H1 (cell line): ENCODE measurements at regions of chr11 and their contacts with region 1.

Region 1: DNA sequence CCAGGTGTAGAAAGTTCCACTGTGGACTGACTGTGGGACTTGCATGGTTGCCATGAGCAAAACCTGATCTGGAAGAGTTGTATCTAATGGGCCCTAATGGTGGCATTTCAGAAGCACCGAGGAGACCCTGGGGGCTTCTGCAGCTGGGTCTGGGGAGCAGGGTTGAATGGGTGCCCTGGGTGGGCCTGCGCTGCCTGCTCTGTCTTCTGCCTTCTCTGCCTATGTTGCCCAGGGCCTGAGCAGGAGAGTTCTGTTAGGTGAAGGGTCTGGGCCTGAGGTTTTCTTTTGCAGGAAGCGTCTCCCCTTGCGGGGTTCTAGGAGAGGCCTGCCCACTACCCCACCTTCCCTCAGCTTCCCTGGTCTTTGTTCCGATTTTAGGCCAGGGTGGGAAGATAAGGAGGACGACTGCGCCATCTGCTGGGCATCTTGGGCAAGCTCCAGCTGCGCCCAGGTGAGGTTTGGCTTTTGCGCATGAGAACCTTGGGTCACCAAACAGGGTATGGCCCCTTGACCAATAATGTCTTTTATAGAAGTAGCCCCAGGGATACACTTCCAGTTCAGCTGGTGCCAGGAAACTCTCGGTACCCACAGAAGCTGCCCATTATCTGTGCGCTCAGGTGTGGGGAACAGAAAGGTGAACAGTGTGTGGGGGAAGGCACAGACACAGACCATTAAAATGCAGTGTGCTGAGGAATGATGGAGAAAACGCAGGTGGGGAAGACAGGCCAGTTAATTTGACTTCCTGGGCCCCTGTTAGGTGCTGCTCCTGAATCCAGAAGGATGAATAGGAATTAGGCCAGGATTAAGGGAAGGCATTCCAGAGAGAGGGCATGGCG is 23.2 kb downstream of the COMMD9 start:
- DNase-seq: peak; percentile 69 to 88
- H3K4me3 ChIP-seq: no peak overlapping the region
- H3K27ac ChIP-seq: no peak overlapping the region
- H3K4me1 ChIP-seq: peaks cover 0 to 1% (median 0%) of the 10 kb centered on the region in 4 experiments; a peak in 1 of 7 replicates
- H3K27me3 ChIP-seq: 0 out of 7 replicates have a peak, but pooled peaks cover 0 to 2% (median 0%) of the 10 kb centered on the region in 4 experiments
- CTCF ChIP-seq: peak; percentile 92 to 95 (median 94)
- EP300 ChIP-seq: no peak
- POLR2A ChIP-seq: no peak
- RAD21 ChIP-seq: peak; percentile 96 to 97

Region 2: GRCh38 chr11:36041988-36042611 is 223.9 kb before region 1 on chr11:
- CTCF ChIA-PET with region 1: interaction called, 11 read pairs
- POLR2A ChIA-PET with region 1: no interaction called
- DNase-seq: no peak
- H3K4me3 ChIP-seq: no peak overlapping the region
- H3K27ac ChIP-seq: no peak overlapping the region
- H3K4me1 ChIP-seq: peaks cover 0 to 9% (median 4%) of the 10 kb centered on the region in 4 experiments; a peak in 3 of 7 replicates
- H3K27me3 ChIP-seq: no peaks in the 10 kb centered on the region
- CTCF ChIP-seq: peak in 2 of 3 experiments; percentile 48 to 52; a peak in 2 of 4 replicates
- EP300 ChIP-seq: no peak
- POLR2A ChIP-seq: no peak
- RAD21 ChIP-seq: peak; percentile 50 to 59

Region 3: GRCh38 chr11:36123346-36124101 is 142.5 kb before region 1 on chr11:
- CTCF ChIA-PET with region 1: no interaction called
- POLR2A ChIA-PET with region 1: no interaction called
- DNase-seq: no peak
- H3K4me3 ChIP-seq: no peak overlapping the region
- H3K27ac ChIP-seq: no peak overlapping the region
- H3K4me1 ChIP-seq: peaks cover 3 to 12% (median 8%) of the 10 kb centered on the region in 4 experiments; a peak in 5 of 7 replicates
- H3K27me3 ChIP-seq: no peaks in the 10 kb centered on the region
- CTCF ChIP-seq: no peak
- EP300 ChIP-seq: no peak
- POLR2A ChIP-seq: no peak
- RAD21 ChIP-seq: no peak

Region 4: GRCh38 chr11:36149538-36150242 is 116.3 kb before region 1 on chr11:
- CTCF ChIA-PET with region 1: interaction called, 14 read pairs
- POLR2A ChIA-PET with region 1: no interaction called
- DNase-seq: peak in 1 of 2 experiments; percentile 75
- H3K4me3 ChIP-seq: no peak overlapping the region
- H3K27ac ChIP-seq: peak overlapping the region; percentile 60; the same call in 1 of the 2 replicates
- H3K4me1 ChIP-seq: peaks cover 0 to 16% (median 4%) of the 10 kb centered on the region in 4 experiments; a peak in 4 of 7 replicates
- H3K27me3 ChIP-seq: no peaks in the 10 kb centered on the region
- CTCF ChIP-seq: peak; percentile 45 to 69 (median 53)
- EP300 ChIP-seq: no peak
- POLR2A ChIP-seq: no peak
- RAD21 ChIP-seq: peak; percentile 76 to 79

Region 5: DNA sequence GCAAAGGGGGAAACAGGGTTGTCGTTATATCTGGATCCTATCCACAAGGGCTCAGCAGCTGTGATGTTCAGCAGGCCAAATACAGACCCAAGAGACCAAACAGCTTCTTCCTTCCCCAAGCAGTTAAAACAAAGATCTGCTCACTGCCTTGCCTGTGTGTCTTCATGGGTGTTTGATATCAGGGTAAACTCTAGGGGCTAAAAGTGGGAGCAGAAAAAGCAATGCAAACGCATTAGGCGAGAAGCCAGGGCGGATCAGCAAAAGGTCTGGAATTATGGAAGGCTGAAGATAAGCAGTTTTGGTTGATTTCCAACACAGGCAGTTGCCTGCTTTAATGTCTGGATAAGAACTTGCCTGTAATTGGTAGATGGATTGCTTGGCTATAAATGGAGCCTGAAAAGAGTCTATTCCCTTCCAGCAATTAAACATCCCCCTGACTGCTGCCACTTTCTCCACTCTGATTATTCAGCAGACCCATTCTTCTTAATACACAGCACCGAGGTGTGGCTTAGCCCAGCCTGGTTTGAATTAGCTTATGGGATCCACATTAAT is 103.1 kb before region 1 on chr11:
- CTCF ChIA-PET with region 1: interaction called, 14 read pairs
- POLR2A ChIA-PET with region 1: no interaction called
- DNase-seq: no peak
- H3K4me3 ChIP-seq: no peak overlapping the region
- H3K27ac ChIP-seq: no peak overlapping the region
- H3K4me1 ChIP-seq: peaks cover 0 to 5% (median 0%) of the 10 kb centered on the region in 4 experiments; a peak in 2 of 7 replicates
- H3K27me3 ChIP-seq: no peaks in the 10 kb centered on the region
- CTCF ChIP-seq: no peak
- EP300 ChIP-seq: no peak
- POLR2A ChIP-seq: no peak
- RAD21 ChIP-seq: no peak

Region 6: DNA sequence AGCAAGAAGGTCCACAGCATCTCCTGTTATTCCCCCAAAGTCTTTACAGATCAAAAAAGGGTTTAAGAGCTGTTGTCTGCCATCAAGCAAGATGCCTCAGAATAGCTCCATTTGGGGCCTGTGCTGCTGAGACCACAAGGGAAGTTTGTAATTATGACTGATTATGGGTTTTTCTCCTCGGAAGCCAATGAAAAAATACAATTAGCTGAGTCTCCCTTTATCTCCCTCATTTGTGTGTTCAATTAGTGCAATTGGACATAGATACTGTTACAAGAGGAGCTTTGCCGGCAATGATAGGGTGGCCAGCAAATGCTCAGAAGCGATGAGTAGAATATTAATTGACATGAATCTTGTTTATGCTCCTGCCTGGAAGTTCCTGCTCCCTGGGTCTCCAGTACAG is 60.5 kb before region 1 on chr11:
- CTCF ChIA-PET with region 1: no interaction called
- POLR2A ChIA-PET with region 1: no interaction called
- DNase-seq: no peak
- H3K4me3 ChIP-seq: no peak overlapping the region
- H3K27ac ChIP-seq: no peak overlapping the region
- H3K4me1 ChIP-seq: no peaks in the 10 kb centered on the region
- H3K27me3 ChIP-seq: no peaks in the 10 kb centered on the region
- CTCF ChIP-seq: no peak
- EP300 ChIP-seq: no peak
- POLR2A ChIP-seq: no peak
- RAD21 ChIP-seq: no peak

Region 7: DNA sequence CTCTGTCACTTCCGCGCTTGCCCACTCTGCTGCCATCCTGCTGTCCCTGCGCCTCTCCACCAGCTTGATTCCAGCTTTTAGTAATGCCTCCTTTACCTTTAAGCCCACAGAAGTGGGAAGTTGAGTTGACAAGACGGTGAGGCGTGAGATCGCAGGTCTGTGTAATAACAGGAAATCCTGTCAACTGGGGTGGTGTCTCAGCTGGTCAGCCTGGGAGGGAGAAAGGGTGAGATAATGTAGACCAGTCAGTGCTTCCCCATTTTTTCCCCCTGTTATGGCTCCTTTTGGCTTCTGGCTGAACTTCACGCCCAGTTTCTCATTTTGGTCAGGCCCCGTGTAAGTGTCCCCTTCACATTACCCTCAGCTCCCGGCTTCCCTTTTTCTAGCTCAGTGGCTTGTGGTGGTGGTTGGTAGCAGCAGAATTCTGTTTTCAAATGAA is 145.2 kb after region 1 on chr11:
- CTCF ChIA-PET with region 1: no interaction called
- POLR2A ChIA-PET with region 1: no interaction called
- DNase-seq: no peak
- H3K4me3 ChIP-seq: no peak overlapping the region
- H3K27ac ChIP-seq: no peak overlapping the region
- H3K4me1 ChIP-seq: no peaks in the 10 kb centered on the region
- H3K27me3 ChIP-seq: no peaks in the 10 kb centered on the region
- CTCF ChIP-seq: no peak
- EP300 ChIP-seq: no peak
- POLR2A ChIP-seq: no peak
- RAD21 ChIP-seq: no peak

Region 8: GRCh38 chr11:36558571-36559413 is 292.8 kb after region 1 on chr11:
- CTCF ChIA-PET with region 1: no interaction called
- POLR2A ChIA-PET with region 1: no interaction called
- DNase-seq: no peak
- H3K4me3 ChIP-seq: no peak overlapping the region
- H3K27ac ChIP-seq: no peak overlapping the region
- H3K4me1 ChIP-seq: no peaks in the 10 kb centered on the region
- H3K27me3 ChIP-seq: no peaks in the 10 kb centered on the region
- CTCF ChIP-seq: no peak
- EP300 ChIP-seq: no peak
- POLR2A ChIP-seq: no peak
- RAD21 ChIP-seq: no peak